ENCODE measurements at regions of chr1 and their contacts with region 1.

Region 1: GRCh38 chr1:151968058-151968457 is 25.6 kb downstream of the S100A10 start:
- DNase-seq: peak; percentile 57
- CTCF ChIP-seq: peak; percentile 69

Region 2: DNA sequence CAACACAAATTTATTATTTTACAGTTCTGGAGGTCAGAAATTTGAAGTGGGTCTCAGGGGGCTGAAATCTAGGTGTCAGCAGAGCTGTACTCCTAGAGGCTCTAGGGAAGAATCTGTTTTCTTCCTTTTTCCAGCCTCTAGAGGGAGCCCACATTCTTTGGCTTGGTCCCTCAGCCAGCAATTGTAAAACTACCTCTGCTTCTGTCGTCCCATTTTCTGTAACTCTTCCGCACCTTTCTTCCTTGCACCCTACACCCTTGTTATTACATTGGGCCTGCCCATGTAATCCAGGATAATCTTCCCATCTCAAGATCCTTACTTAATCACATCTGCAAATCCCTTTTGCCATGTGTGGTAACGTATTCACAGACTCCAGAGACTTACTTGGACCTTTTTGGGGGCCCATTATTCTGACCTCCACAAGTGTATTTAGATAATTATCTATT is 34.0 kb before region 1 on chr1:
- CTCF ChIA-PET with region 1: interaction called, 10 read pairs
- POLR2A ChIA-PET with region 1: no interaction called
- DNase-seq: peak; percentile 42
- CTCF ChIP-seq: peak; percentile 61

Region 3: DNA sequence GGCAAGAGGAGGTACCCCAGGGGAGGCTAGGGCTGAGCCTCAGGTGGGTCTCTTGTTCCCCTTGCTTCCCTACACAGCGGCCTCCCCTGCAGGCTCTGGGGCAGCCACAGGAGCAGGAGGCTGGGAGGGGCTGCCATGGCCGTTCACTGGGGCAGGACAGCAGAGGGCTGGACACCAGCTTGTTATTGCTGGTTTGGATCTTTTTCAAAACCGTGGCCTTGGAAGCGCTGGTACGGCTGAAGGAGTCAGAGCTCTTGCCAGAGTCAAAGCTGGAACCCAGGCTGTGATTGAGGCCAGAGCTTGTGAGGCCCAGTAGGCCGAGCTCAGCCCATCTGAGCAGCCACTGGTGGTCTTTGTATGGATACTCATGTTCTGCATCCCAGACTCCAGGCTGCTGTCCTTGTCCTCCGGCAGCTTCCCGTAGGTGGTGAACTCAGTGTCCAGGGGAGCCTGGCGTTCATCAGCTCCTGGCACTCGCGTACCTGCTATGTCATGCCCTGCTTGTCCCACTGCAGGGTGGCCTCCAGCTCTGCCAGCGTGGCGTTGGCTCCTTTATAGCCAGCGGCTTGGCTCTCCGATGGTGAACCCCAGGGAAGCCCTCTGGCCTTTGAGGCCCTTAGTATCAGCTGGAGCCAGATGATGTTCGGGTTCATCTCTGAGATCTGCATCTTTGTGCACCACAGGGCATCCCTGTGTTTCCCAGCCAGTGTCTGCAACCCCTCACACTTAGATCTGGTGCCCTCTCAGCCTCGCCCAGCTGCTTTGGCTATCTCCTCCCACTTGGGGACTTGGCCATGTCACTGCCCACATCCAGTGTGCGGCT is 18.5 kb before region 1 on chr1:
- CTCF ChIA-PET with region 1: interaction called, 13 read pairs
- POLR2A ChIA-PET with region 1: interaction called, 5 read pairs
- DNase-seq: no peak
- CTCF ChIP-seq: no peak

Region 4: GRCh38 chr1:151989211-151989862 is 21.3 kb after region 1 on chr1:
- CTCF ChIA-PET with region 1: interaction called, 41 read pairs
- POLR2A ChIA-PET with region 1: no interaction called
- DNase-seq: no peak
- CTCF ChIP-seq: no peak

Region 5: GRCh38 chr1:151994956-151995355 is 26.9 kb after region 1 on chr1:
- CTCF ChIA-PET with region 1: interaction called, 131 read pairs
- POLR2A ChIA-PET with region 1: no interaction called
- DNase-seq: no peak
- CTCF ChIP-seq: no peak

Measured in GM10248 (cell line).